Activated naive CD4-positive, alpha-beta T cell treated with anti-CD3 and anti-CD28 coated beads for 36 hours (primary cell): ENCODE measurements at regions of chr10 and their contacts with region 1.

Region 1: DNA sequence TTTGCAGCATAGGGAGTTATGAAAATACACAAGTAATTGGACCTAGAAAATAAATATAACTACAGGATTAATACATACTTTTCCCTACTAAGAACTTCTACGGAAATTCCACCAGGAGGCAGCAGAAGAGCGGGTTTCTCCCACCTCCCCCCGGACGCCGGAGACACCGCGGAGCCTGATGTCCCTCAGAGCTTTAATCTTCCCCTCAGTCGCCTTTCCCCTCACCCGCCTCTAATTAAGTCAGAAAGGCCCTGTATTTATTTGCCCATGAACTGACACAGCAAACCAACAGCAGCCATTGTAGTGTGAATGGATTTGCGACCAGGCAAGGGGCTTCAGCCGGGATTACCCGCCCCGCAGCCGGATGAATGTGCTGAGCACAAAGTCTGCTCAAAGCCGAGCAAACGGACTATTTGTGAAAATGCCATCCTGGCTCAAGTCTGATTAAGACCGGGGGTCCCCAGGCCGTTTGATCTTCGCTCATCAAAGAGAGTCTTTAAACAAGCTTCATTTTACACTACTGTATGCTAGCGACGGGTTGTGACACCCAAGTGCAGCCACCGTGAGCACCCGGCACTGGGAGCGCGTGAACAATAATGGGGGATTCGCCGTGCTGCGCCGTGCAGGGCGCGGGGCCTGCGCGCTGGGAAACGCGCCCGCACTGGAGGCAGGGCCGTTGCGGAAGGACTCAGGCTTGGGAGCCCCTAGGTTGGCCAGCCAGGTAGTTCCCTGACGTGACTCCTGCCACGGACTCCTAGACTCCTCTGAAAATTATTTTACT is 5.6 kb upstream of the DKK1 start:
- DNase-seq: peak; percentile 14
- H3K4me3 Mint-ChIP-seq: no peak overlapping the region
- H3K27ac Mint-ChIP-seq: no peak overlapping the region
- H3K4me1 Mint-ChIP-seq: peaks cover 8% of the 10 kb centered on the region
- H3K27me3 Mint-ChIP-seq: peaks cover 46% of the 10 kb centered on the region

Region 2: GRCh38 chr10:52318822-52319461 is 10.5 kb after region 1 on chr10:
- CTCF ChIA-PET with region 1: no interaction called
- intact Hi-C with region 1: no loop called
- DNase-seq: no peak
- H3K4me3 Mint-ChIP-seq: no peak overlapping the region
- H3K27ac Mint-ChIP-seq: no peak overlapping the region
- H3K4me1 Mint-ChIP-seq: peaks cover 5% of the 10 kb centered on the region
- H3K27me3 Mint-ChIP-seq: peaks cover 15% of the 10 kb centered on the region

Region 3: DNA sequence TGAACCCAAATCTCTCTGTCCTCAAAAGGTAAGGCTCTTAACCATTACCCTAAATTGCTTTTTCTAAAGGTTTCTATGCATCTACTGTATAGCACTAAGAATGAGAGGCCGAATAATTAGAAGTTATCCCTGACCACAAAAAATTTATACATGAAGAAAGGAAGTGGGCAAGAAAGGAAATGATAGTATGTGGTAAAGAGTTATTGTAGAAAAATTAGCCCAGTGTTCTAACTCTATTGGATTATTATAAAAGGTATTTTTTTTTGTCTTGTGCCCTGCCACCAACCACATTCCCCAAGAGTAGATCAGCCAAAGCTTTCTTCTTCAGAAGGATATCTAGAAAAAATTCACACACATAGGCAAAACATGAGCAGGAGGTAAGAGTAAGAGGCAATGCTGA is 51.0 kb after region 1 on chr10:
- CTCF ChIA-PET with region 1: no interaction called
- intact Hi-C with region 1: no loop called
- DNase-seq: no peak
- H3K4me3 Mint-ChIP-seq: no peak overlapping the region
- H3K27ac Mint-ChIP-seq: no peak overlapping the region
- H3K4me1 Mint-ChIP-seq: no peaks in the 10 kb centered on the region
- H3K27me3 Mint-ChIP-seq: no peaks in the 10 kb centered on the region

Region 4: DNA sequence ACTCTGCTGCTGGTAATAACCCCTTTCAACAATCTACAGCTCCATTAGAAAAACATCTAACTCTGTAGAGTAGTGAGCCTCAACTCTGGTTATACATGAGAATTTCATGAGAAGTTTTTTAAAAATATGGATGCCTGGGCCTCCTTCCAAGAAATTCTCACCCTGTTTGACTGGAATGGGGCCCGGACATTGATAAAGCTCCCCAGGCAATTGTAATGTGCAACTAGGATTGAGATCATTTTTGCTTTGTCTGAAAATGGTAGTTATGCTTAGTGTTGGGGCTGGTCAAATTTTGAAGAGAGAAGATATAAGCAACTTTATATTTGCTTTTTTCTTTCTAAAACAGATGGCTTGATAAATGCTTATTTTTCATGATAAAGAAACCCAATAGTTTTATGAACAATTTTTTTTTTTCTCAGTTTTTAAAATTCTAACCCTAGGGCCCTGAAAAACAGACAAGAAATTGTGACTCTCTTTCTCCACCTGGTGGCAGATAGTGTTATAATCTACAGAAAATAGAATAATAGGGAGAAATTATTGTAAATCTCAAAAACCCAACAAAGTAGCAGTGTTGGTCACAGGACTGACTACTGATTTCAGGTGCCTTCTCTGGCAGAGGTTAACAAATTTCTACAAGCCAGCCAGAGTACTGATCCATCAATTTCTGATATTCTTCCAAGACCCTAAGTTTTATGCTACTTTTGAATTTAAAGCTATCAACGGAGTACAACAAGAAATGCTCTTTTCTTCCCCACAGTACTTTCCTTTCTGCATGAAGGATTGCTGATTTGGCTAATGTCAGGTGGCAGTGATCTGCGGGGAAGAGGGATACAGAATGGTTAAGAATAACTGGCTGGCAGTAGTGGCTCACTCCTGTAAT is 180.4 kb after region 1 on chr10:
- CTCF ChIA-PET with region 1: interaction called, 7 read pairs
- intact Hi-C with region 1: loop called (anchors 1 kb)
- DNase-seq: no peak
- H3K4me3 Mint-ChIP-seq: no peak overlapping the region
- H3K27ac Mint-ChIP-seq: no peak overlapping the region
- H3K4me1 Mint-ChIP-seq: no peaks in the 10 kb centered on the region
- H3K27me3 Mint-ChIP-seq: no peaks in the 10 kb centered on the region

Region 5: DNA sequence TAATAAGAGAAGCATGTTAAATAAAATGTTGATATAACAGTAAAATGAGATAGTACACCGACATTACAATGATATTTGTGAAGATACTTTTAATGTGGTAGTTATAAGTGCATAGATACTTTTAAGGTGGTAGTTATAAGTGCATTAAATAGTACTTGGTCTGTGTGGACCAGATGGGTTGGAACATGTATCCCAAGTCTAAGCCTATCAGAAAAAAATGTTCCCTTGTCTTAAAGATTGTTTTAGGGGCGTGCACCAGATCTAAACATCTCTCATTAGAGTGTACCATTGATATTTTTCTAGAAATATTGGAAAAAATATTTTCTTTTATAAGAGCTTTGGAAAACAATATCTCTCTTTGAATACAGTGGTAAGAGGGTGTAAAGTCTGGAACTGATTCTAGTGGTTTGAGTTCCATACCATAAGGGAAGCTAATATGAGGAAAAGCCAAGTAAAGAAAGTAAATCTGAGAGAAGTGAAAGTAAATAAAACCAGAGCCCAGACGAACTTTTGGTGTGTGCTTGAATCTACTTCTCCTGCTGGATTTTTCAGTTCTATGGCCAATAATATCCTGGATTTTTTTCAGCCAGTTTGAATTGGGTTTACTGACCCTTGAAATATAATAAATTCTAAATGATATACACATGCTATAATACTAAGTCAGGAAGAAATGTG is 288.9 kb after region 1 on chr10:
- CTCF ChIA-PET with region 1: no interaction called
- intact Hi-C with region 1: loop called (anchors 10 kb)
- DNase-seq: no peak
- H3K4me3 Mint-ChIP-seq: no peak overlapping the region
- H3K27ac Mint-ChIP-seq: no peak overlapping the region
- H3K4me1 Mint-ChIP-seq: no peaks in the 10 kb centered on the region
- H3K27me3 Mint-ChIP-seq: no peaks in the 10 kb centered on the region

Region 6: GRCh38 chr10:52729271-52730104 is 421.0 kb after region 1 on chr10:
- CTCF ChIA-PET with region 1: interaction called, 3 read pairs
- intact Hi-C with region 1: loop called (anchors 1 kb)
- DNase-seq: no peak
- H3K4me3 Mint-ChIP-seq: no peak overlapping the region
- H3K27ac Mint-ChIP-seq: no peak overlapping the region
- H3K4me1 Mint-ChIP-seq: no peaks in the 10 kb centered on the region
- H3K27me3 Mint-ChIP-seq: no peaks in the 10 kb centered on the region

Region 7: DNA sequence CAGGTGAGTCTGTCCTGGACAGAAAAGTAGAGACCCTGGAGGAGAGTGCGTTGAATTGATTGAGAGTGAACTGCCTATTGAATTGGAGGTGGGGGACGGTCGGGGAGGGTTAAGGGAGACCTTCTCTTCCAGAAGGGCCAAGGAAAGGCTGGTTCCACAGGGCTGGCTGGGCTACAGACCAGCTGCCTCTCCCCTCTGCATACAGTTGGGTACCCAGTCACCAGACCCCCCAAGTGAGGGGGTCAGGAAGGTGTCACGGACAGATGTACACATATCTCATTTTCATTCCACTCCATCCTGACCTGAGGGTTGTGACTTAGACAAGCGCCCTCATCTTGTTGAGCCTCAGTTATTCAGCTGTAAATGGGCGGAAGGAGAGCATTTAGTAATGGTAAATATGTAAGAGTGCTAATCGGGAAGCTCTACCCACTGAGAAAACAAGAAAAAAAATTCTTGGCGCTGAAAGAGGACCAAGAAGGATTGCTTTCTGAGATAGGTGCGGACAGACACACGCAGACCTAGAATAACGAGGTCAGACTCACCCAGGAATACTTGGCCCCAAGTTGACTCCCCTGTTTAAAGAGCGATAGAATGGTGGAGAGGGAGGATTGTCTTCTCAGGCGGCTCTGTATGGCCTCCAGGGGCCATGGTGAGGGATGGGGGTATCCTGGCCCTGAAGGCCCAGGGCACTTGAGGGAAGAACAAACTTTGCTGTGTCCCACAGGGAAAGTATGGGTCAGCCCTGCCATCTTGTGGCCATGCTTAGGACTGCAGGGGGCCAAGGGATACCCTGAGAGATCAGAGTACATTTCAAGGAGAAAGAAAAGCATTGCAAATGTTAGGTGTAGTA is 471.3 kb after region 1 on chr10:
- CTCF ChIA-PET with region 1: no interaction called
- intact Hi-C with region 1: loop called (anchors 5 kb)
- DNase-seq: peak; percentile 67
- H3K4me3 Mint-ChIP-seq: no peak overlapping the region
- H3K27ac Mint-ChIP-seq: no peak overlapping the region
- H3K4me1 Mint-ChIP-seq: no peaks in the 10 kb centered on the region
- H3K27me3 Mint-ChIP-seq: no peaks in the 10 kb centered on the region